ENCODE measurements at regions of chr11 and their contacts with region 1.

Region 1: GRCh38 chr11:116224154-116224888 is 548.5 kb downstream of the BUD13 start:
- DNase-seq: peak; percentile 45
- H3K4me3 ChIP-seq: no peak overlapping the region
- H3K27ac ChIP-seq: no peak overlapping the region
- H3K4me1 ChIP-seq: no peaks in the 10 kb centered on the region
- H3K27me3 ChIP-seq: no peaks in the 10 kb centered on the region
- CTCF ChIP-seq: peak; percentile 46 to 56 (median 51)
- POLR2A ChIP-seq: no peak

Region 2: GRCh38 chr11:115496917-115497702 is 727.2 kb before region 1 on chr11:
- intact Hi-C with region 1: loop called (anchors 10 kb)
- DNase-seq: no peak
- H3K4me3 ChIP-seq: no peak overlapping the region
- H3K27ac ChIP-seq: no peak overlapping the region
- H3K4me1 ChIP-seq: no peaks in the 10 kb centered on the region
- H3K27me3 ChIP-seq: no peaks in the 10 kb centered on the region
- CTCF ChIP-seq: no peak
- POLR2A ChIP-seq: no peak

Region 3: DNA sequence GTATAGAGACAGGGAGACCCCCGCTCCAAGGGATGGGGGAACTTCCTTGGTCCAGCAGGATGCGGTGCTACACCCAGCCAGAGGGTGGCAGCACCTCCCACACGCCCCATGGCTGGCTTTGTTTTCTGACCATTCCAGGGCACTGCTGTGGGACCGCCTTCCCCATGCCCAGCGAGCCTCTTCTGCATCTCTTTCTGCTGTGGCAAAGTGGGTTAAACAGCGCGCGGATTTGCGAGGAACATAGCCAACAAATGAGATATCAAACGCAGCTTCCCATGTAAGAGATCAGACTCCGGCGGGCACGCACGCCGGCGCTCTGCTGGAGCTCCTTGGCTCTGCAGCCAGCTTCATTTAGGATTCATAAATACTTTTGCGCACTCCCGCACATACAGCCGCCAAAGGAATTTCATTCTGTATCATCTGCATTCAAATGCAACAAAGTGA is 234.3 kb before region 1 on chr11:
- intact Hi-C with region 1: loop called (anchors 10 kb)
- DNase-seq: no peak
- H3K4me3 ChIP-seq: no peak overlapping the region
- H3K27ac ChIP-seq: no peak overlapping the region
- H3K4me1 ChIP-seq: no peaks in the 10 kb centered on the region
- H3K27me3 ChIP-seq: no peaks in the 10 kb centered on the region
- CTCF ChIP-seq: peak; percentile 14 to 58 (median 44)
- POLR2A ChIP-seq: no peak

Region 4: DNA sequence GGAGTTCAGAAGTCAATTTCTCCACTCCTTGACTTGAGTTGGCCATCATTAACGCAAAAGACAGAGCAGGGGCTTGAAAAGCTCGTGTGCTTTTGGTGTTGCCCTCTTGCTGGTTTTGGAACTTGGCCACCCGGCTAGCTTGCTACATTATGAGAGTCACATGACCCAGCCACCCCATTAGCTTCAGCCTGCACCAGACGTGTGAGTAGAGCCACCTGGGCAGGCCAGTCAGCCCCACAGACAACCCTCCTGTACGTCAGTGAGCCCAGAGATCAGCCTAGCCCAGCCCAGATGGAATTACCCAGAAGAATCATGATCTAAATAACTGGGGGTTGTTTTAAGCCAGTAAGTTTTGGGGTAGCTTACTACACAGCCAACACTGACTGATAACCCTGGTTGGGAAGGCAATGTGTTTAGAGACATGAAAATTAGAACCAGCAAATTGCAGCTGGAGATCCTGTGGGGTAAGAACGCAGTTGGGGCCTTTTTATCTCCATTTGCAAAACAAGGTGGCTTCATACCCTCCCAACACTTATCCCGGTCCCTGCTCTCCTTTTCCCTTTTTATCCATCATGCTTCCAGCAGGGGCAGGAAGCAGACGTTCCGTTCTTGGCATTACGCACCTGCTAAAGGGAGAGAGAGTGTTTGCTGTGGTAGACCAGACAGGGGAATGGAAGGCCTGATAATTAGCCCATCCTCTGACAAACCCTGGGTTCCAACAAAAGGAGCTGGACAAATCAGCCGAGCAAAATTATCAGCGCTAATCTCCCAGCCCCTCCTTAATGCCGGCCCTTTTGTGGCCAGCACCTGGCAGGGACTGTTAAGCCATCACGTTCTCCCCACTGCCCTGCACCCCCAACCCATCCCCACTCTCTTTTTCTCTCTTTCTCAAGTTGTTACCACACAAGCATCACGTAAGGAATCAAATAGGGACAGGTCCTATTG is 171.4 kb before region 1 on chr11:
- intact Hi-C with region 1: no loop called
- DNase-seq: no peak
- H3K4me3 ChIP-seq: no peak overlapping the region
- H3K27ac ChIP-seq: no peak overlapping the region
- H3K4me1 ChIP-seq: no peaks in the 10 kb centered on the region
- H3K27me3 ChIP-seq: peaks cover 3% of the 10 kb centered on the region
- CTCF ChIP-seq: no peak
- POLR2A ChIP-seq: no peak

Region 5: GRCh38 chr11:116366980-116367645 is 142.8 kb after region 1 on chr11:
- intact Hi-C with region 1: no loop called
- DNase-seq: no peak
- H3K4me3 ChIP-seq: no peak overlapping the region
- H3K27ac ChIP-seq: no peak overlapping the region
- H3K4me1 ChIP-seq: no peaks in the 10 kb centered on the region
- H3K27me3 ChIP-seq: peaks cover 2% of the 10 kb centered on the region
- CTCF ChIP-seq: no peak
- POLR2A ChIP-seq: no peak

Measured in prostate gland (tissue), 2 donors.